ENCODE measurements at regions of chr3 and their contacts with region 1.

Region 1: DNA sequence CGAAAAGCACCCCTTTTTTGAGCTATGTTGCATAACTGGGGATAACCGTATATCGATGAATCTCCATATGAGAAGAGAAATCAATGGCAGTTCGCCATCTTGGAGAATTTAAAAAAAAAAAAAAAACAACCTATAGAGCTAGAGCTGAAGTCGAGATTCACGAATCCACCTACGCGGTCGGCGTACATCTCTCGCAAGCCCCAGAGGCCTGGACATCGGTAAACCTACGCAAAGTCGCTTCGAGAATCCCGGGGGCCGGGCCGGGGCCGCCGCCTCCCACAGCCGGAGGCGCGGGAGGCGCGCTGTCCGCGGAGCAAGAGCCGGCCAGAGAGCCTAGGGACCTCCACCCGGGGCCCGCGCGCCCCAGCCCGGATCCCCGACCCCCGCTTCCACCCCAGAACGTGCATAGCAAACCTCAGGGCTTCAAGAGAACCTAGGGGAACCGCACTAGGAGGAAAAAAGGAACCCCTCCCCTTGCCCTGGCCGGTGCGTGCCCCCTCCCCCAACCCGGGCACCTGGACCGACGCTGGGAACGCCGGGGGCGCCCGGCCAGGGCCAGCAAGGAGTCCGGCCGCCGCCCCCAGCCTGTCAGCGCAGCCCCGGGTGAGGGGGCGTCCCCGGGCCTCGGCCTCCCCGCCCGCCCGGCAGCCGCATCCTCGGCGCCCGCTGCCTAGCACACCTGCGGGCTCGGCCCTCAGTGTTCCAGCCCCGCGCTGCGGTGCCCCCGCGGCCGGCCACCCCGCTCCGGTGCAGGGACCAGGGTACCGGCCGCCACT is 567 bp downstream of the PFN2 start:
- DNase-seq: peak; percentile 55
- H3K4me3 ChIP-seq: peak overlapping the region; percentile 71
- H3K27ac ChIP-seq: no peak overlapping the region
- H3K4me1 ChIP-seq: peaks cover 8% of the 10 kb centered on the region
- CTCF ChIP-seq: no peak

Region 2: DNA sequence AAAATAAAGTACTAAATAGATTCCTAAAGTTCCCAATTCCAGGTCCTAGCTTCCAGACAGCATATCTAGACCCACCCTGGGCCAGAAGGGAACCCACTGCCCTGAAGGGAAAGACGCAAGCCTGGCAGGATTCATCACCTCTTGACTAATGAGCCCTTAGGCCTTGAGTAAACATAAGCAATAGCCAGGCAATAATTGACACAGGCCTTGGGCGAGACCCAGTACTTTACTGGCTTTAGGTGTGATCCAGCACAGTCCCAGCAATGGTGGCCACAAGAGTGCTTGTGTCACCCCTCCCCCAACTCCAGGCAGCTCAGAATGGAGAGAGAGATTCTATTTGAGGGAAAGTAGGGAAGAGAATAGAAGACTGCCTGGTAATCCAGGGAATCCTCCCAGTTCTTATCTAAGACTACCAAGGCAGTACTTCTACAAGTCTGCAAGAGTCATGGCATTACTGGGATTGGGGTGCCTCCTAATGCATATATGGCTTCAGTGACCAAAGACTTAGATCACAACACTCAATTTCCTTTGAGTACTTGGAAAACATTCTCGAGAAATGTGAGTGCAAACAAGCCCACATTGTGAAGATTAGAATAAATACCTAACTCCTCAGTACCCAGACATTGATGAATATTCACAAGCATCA is 281.9 kb before region 1 on chr3:
- CTCF ChIA-PET with region 1: no interaction called
- POLR2A ChIA-PET with region 1: no interaction called
- intact Hi-C with region 1: no loop called
- DNase-seq: no peak
- H3K4me3 ChIP-seq: no peak overlapping the region
- H3K27ac ChIP-seq: no peak overlapping the region
- H3K4me1 ChIP-seq: no peaks in the 10 kb centered on the region
- CTCF ChIP-seq: no peak

Region 3: GRCh38 chr3:149752051-149752787 is 217.9 kb before region 1 on chr3 and contains the start of gene COMMD2:
- CTCF ChIA-PET with region 1: no interaction called
- POLR2A ChIA-PET with region 1: no interaction called
- intact Hi-C with region 1: loop called (anchors 10 kb)
- DNase-seq: peak; percentile 94
- H3K4me3 ChIP-seq: peak within 1 kb of the TSS; percentile 77
- H3K27ac ChIP-seq: peak within 1 kb of the TSS; percentile 36
- H3K4me1 ChIP-seq: peaks cover 22% of the 10 kb centered on the region
- CTCF ChIP-seq: peak; percentile 75
- total RNA-seq, gene COMMD2: 24.9 and 27.2 TPM in 2 replicates

Region 4: DNA sequence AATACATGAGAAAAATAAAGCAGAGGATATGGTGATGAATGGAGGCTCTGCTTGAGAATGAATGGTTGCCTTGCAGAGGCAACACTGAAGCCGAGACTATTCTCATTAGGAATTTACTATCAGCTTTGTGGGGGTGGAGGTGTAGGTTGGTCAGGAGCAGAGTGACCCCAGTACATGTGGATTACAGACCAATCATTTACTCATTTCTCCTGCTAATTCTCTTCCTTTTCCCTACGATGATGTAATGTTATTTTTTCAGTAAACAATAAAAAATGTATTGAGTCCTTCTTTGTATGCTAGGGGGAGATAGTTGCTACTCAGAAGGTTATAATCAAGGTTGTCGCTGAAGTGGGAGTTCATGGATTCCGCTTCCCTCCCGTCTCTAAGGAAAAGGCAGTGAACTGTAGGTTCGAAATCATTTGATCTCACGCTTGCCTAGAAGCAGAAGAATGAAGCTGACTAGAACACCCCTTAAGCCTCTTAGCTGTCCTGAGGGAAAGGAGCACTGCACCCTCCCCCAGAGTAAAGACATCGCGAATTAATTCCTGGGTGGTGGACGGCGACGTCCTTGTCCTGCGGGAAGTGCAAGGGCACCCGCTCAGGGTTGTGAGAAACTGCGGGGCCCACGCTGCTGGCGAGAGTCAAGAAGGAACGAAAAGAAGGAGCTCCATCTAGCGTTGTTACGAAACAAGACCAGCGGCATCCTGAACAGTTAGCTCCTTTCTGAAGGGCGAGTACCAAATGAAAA is 213.7 kb after region 1 on chr3:
- CTCF ChIA-PET with region 1: no interaction called
- POLR2A ChIA-PET with region 1: no interaction called
- intact Hi-C with region 1: loop called (anchors 5 kb)
- DNase-seq: peak; percentile 36
- H3K4me3 ChIP-seq: no peak overlapping the region
- H3K27ac ChIP-seq: no peak overlapping the region
- H3K4me1 ChIP-seq: no peaks in the 10 kb centered on the region
- CTCF ChIP-seq: peak; percentile 66